ENCODE measurements at regions of chr19 and their contacts with region 1.

Region 1: DNA sequence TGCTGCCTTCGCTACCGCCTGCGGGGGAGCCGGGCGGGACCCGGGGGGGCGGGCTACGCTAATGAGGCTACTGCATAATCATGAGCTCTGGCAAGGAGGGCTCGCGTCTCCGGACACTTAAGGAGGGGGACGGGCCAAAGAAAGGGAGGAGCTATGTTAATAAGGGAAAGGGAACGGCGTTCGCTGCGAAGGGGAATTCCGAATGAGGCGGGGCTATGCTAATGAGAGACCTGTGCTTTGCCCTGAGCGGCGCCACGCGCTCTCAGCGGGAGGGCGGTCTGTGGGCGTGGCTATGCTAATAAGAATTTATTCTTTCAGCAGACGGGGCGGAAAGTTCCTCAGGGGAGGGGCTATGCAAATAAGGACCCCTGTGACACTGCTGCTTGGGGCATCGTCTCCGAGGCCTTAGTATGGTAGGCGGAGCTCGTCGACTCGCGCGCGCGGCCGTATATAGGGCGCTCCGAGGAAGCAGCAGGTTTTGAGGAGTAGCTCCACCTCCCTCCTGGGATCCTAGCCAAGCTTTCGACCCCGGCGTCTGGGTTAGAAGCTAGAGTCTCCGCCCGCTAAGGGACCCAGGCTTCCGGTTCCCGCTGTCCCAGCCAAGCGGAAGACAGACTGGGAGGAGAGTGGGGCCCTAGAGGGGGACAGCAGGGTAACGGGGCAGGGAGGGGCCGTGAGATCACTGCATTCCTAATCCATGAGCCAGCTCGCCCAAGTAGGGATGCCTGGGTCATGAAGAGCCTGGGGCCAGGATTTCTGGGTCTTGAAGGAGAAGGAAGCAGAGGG is at the start of gene RRAS:
- DNase-seq: peak; percentile 96

Region 2: GRCh38 chr19:49580264-49581006 is 59.9 kb before region 1 on chr19 and contains the start of gene NOSIP:
- CTCF ChIA-PET with region 1: no interaction called
- POLR2A ChIA-PET with region 1: interaction called, 20 read pairs
- DNase-seq: peak; percentile 93

Region 3: GRCh38 chr19:49590071-49590970 is 50.0 kb before region 1 on chr19:
- CTCF ChIA-PET with region 1: no interaction called
- POLR2A ChIA-PET with region 1: interaction called, 61 read pairs
- DNase-seq: peak; percentile 95

Region 4: DNA sequence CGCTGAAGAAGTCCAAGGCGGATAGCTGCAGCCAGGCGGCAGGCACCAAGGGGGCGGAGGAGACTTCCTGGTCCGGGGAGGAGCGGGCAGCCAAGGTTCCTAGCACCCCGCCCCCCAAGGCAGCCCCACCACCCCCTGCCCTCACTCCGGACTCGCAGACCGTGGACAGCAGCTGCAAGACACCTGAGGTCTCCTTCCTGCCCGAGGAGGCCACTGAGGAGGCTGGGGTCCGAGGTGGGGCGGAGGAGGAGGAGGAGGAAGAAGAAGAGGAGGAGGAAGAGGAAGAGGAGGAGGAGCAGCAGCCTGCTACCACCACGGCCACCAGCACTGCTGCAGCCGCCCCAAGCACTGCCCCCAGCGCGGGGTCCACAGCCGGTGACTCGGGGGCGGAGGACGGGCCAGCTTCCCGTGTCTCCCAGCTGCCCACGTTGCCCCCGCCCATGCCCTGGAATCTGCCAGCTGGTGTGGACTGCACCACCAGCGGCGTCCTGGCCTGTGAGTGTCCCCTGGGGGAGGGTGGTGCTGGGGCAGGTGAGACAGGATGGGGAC is 13.0 kb after region 1 on chr19:
- CTCF ChIA-PET with region 1: no interaction called
- POLR2A ChIA-PET with region 1: interaction called, 27 read pairs
- DNase-seq: no peak

Region 5: GRCh38 chr19:49665351-49666119 is 25.2 kb after region 1 on chr19 and contains the starts of genes BCL2L12 and IRF3:
- CTCF ChIA-PET with region 1: no interaction called
- POLR2A ChIA-PET with region 1: interaction called, 57 read pairs
- DNase-seq: peak; percentile 92

Region 6: DNA sequence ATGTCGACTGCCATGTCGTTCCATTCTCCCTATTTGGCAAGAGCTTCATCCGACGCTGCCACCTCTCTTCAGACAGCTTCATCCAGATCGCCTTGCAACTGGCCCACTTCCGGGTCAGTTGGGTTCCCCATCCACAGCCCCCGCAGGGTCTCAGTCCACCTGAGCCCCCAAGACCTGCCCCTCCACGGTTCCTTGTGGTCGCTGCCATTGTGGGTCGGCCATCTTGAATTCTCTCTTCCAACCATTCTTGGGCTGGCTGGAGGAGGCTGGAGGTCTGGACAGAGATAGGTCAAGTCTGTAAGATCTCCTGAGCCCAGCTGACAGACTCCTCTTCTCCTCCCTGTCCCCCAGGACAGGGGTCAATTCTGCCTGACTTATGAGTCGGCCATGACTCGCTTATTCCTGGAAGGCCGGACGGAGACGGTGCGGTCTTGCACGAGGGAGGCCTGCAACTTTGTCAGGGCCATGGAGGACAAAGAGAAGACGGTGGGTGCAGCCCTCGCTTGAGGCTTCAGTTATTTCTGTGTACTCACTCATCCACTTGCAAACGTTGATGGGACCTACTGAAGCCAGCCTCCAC is 70.2 kb after region 1 on chr19:
- CTCF ChIA-PET with region 1: no interaction called
- POLR2A ChIA-PET with region 1: no interaction called
- DNase-seq: no peak

Measured in HEK293T (cell line).